Activated T-helper 2 cell treated with anti-CD3 and anti-CD28 coated beads, Interferon-gamma antibody, Interleukin-2, Interleukin-4, amounts not matched to agents 10 μg/mL and 5 μg/mL and 100 μg/mL, durations not matched to agents 14 hours and 24 hours and 36 hours (primary cell): ENCODE measurements at regions of chr1 and their contacts with region 1.

Region 1: GRCh38 chr1:200888349-200888838 is 6.3 kb upstream of the INAVA start:
- DNase-seq: peak; percentile 45
- H3K4me3 Mint-ChIP-seq: no peak overlapping the region
- H3K27ac Mint-ChIP-seq: no peak overlapping the region
- H3K4me1 Mint-ChIP-seq: peaks cover 36% of the 10 kb centered on the region
- H3K27me3 Mint-ChIP-seq: peaks cover 55% of the 10 kb centered on the region

Region 2: DNA sequence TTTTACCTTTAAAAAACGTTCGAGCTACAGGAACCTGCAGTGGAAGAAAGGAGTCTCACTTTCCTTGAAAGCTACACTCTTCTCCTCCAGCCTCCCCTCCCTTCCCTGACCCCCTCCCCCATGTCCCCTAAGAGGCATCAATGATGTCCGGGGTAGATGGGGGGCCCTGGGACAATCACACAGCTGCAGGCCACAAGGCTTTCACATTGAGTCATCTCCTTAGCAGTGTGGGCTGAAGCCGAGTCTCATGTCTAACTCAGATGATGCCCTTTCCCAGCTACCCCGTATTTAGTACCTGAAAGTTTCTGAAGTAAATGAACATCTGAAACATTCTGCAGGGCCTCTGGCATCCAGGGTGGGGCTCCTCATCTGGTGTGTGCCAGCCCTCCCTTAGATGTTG is 21.9 kb before region 1 on chr1:
- intact Hi-C with region 1: loop called (anchors 1 kb)
- DNase-seq: no peak
- H3K4me3 Mint-ChIP-seq: no peak overlapping the region
- H3K27ac Mint-ChIP-seq: no peak overlapping the region
- H3K4me1 Mint-ChIP-seq: peaks cover 24% of the 10 kb centered on the region
- H3K27me3 Mint-ChIP-seq: peaks cover 50% of the 10 kb centered on the region

Region 3: GRCh38 chr1:200877839-200878551 is 10.4 kb before region 1 on chr1:
- intact Hi-C with region 1: loop called (anchors 1 kb)
- DNase-seq: no peak
- H3K4me3 Mint-ChIP-seq: no peak overlapping the region
- H3K27ac Mint-ChIP-seq: no peak overlapping the region
- H3K4me1 Mint-ChIP-seq: peaks cover 12% of the 10 kb centered on the region
- H3K27me3 Mint-ChIP-seq: peaks cover 57% of the 10 kb centered on the region

Region 4: GRCh38 chr1:200907611-200908097 is 19.3 kb after region 1 on chr1:
- intact Hi-C with region 1: loop called (anchors 1 kb)
- DNase-seq: no peak
- H3K4me3 Mint-ChIP-seq: no peak overlapping the region
- H3K27ac Mint-ChIP-seq: no peak overlapping the region
- H3K4me1 Mint-ChIP-seq: peaks cover 4% of the 10 kb centered on the region
- H3K27me3 Mint-ChIP-seq: peaks cover 38% of the 10 kb centered on the region

Region 5: DNA sequence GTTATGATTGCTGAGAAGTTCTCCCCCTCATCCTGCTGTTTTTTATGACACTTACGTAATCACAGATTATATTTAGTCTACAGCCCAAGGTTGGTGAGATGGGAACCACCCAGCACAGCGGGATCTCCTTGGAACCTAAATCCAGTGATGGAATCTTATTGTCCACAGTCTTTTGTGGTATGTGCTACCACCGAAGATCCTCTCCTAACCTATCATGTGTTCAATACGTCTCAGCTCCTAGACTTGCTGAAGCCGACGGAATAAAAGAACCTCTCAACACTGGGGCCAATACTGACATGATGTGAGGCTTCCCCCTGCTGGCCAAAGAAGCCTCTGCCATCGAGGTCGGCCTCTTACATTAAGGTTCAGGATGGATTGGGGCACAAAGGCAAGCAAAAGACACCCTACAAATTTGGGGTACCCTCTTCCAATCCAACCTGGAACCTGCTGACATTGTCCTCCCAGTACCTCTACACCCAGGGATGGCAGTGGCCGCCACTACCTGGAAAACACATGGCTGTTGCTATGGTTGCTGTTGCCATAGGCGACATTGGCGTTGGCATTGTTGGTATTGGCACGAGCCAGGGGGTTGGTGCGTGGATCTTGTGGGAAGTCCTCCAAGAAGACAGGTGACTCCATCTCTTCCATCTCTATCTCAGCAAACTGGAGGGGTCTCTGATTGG is 154.5 kb after region 1 on chr1:
- intact Hi-C with region 1: no loop called
- DNase-seq: peak; percentile 53
- H3K4me3 Mint-ChIP-seq: no peak overlapping the region
- H3K27ac Mint-ChIP-seq: no peak overlapping the region
- H3K4me1 Mint-ChIP-seq: peaks cover 3% of the 10 kb centered on the region
- H3K27me3 Mint-ChIP-seq: peaks cover 11% of the 10 kb centered on the region